GM12878 (cell line): ENCODE measurements at regions of chr5 and their contacts with region 1.

Region 1: GRCh38 chr5:158953929-158954534 is 145.7 kb downstream of the EBF1 start:
- DNase-seq: peak; percentile 98
- ATAC-seq: peak; percentile 79
- H3K4me3 ChIP-seq: 0 out of 2 replicates have a peak overlapping the region, but pooled peaks have one; percentile 6
- H3K27ac ChIP-seq: peak overlapping the region; percentile 93
- H3K4me1 ChIP-seq: peaks cover 70% of the 10 kb centered on the region
- H3K27me3 ChIP-seq: no peaks in the 10 kb centered on the region
- CTCF ChIP-seq: no peak
- EP300 ChIP-seq: peak; percentile 94 to 98; a peak in 3 of 4 replicates
- POLR2A ChIP-seq: peak; percentile 47; the same call in 1 of the 2 replicates
- RAD21 ChIP-seq: 0 out of 2 replicates have a peak, but pooled peaks have one; percentile 23

Region 2: GRCh38 chr5:158780656-158781237 is 173.3 kb before region 1 on chr5:
- CTCF ChIA-PET with region 1: interaction called, 4 read pairs
- POLR2A ChIA-PET with region 1: interaction called, 3 read pairs
- RAD21 ChIA-PET with region 1: interaction called, 16 read pairs
- SMC1A ChIA-PET with region 1: interaction called, 20 read pairs
- in situ Hi-C with region 1: no loop called
- intact Hi-C with region 1: no loop called
- DNase-seq: peak; percentile 28
- ATAC-seq: peak; percentile 85
- H3K4me3 ChIP-seq: no peak overlapping the region
- H3K27ac ChIP-seq: peak overlapping the region; percentile 46
- H3K4me1 ChIP-seq: peaks cover 18% of the 10 kb centered on the region
- H3K27me3 ChIP-seq: no peaks in the 10 kb centered on the region
- CTCF ChIP-seq: no peak
- EP300 ChIP-seq: no peak
- POLR2A ChIP-seq: no peak
- RAD21 ChIP-seq: no peak

Region 3: DNA sequence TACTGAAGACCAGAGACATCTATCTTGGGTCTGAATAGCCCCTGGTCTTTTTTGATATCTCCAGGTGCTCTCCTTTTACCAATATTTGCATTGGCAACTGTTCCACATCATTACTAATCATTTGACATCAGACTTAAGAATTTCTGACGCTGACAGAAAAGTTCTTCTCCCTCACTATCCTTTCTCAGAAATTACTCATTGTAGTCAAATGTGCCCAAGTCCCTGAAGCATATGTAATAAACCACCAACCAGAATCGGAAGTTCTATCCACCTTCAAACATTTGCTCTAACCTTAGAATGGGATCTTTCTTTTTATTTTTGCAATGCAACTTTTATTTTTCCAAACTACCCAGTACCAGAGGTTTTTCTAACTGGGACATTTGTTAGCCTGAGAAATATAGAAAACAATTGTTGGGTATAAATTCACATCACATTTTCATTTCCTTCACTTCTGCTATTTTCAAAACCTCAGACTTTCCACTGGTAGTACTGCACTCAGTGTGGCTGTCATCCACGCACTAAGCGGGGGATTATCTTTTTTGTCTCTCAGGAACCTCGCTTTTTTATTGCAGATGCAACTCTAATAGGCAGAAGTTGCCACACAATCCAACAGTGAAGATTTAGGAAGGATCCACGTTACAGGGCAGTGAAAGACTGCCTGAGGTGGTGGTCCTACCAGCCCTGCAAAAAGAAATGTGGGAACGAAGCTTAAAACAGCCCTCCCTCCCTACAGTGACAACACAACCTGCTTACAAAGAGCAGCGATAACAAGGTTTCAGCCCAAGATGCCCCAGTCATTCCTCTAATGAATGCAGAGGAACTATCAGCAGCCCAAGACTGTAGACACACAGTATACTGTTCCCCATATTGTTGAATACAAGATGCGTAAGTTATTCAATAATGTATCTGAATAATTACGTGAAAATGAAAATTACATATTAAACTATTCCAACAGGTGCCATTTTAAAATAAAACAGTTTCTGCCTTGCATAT is 55.6 kb before region 1 on chr5:
- CTCF ChIA-PET with region 1: no interaction called
- POLR2A ChIA-PET with region 1: interaction called, 7 read pairs
- RAD21 ChIA-PET with region 1: interaction called, 35 read pairs
- SMC1A ChIA-PET with region 1: interaction called, 13 read pairs
- in situ Hi-C with region 1: no loop called
- intact Hi-C with region 1: loop called (anchors 1 kb)
- DNase-seq: no peak
- ATAC-seq: peak; percentile 82
- H3K4me3 ChIP-seq: 0 out of 2 replicates have a peak overlapping the region, but pooled peaks have one; percentile 15
- H3K27ac ChIP-seq: peak overlapping the region; percentile 83
- H3K4me1 ChIP-seq: peaks cover 14% of the 10 kb centered on the region
- H3K27me3 ChIP-seq: no peaks in the 10 kb centered on the region
- CTCF ChIP-seq: no peak
- EP300 ChIP-seq: peak; percentile 70 to 74; a peak in 3 of 4 replicates
- POLR2A ChIP-seq: no peak
- RAD21 ChIP-seq: no peak

Region 4: DNA sequence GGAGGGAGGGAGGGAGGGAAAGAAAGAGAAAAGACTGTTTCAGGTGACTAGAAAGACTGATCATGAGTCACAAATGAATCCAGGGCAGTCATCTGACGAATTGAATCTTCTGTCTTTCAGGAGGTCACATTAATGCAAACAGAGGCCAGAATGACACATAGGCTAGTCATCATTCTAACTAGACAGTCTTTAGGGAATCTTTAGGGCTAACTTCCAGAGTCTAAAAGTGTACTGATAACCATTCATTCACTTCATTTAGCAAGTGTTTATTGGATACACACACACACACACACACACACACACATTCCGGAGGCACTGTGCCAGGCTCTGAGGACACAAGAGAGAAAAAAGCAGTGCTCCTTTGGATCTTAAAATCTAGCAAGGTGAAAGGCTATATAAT is 11.0 kb before region 1 on chr5:
- CTCF ChIA-PET with region 1: interaction called, 8 read pairs
- POLR2A ChIA-PET with region 1: interaction called, 6 read pairs
- RAD21 ChIA-PET with region 1: interaction called, 9 read pairs
- SMC1A ChIA-PET with region 1: interaction called, 32 read pairs
- in situ Hi-C with region 1: no loop called
- intact Hi-C with region 1: no loop called
- DNase-seq: no peak
- ATAC-seq: peak; percentile 74
- H3K4me3 ChIP-seq: no peak overlapping the region
- H3K27ac ChIP-seq: no peak overlapping the region
- H3K4me1 ChIP-seq: peaks cover 15% of the 10 kb centered on the region; the same call in 1 of the 2 replicates
- H3K27me3 ChIP-seq: no peaks in the 10 kb centered on the region
- CTCF ChIP-seq: no peak
- EP300 ChIP-seq: no peak
- POLR2A ChIP-seq: no peak
- RAD21 ChIP-seq: no peak

Region 5: GRCh38 chr5:159034083-159034824 is 80.2 kb after region 1 on chr5:
- CTCF ChIA-PET with region 1: interaction called, 5 read pairs
- POLR2A ChIA-PET with region 1: interaction called, 4 read pairs
- RAD21 ChIA-PET with region 1: interaction called, 9 read pairs
- SMC1A ChIA-PET with region 1: interaction called, 12 read pairs
- in situ Hi-C with region 1: no loop called
- intact Hi-C with region 1: loop called (anchors 5 kb)
- DNase-seq: no peak
- ATAC-seq: peak; percentile 84
- H3K4me3 ChIP-seq: peak overlapping the region; percentile 33
- H3K27ac ChIP-seq: peak overlapping the region; percentile 61
- H3K4me1 ChIP-seq: peaks cover 37% of the 10 kb centered on the region
- H3K27me3 ChIP-seq: no peaks in the 10 kb centered on the region
- CTCF ChIP-seq: no peak
- EP300 ChIP-seq: no peak
- POLR2A ChIP-seq: no peak
- RAD21 ChIP-seq: no peak

Region 6: DNA sequence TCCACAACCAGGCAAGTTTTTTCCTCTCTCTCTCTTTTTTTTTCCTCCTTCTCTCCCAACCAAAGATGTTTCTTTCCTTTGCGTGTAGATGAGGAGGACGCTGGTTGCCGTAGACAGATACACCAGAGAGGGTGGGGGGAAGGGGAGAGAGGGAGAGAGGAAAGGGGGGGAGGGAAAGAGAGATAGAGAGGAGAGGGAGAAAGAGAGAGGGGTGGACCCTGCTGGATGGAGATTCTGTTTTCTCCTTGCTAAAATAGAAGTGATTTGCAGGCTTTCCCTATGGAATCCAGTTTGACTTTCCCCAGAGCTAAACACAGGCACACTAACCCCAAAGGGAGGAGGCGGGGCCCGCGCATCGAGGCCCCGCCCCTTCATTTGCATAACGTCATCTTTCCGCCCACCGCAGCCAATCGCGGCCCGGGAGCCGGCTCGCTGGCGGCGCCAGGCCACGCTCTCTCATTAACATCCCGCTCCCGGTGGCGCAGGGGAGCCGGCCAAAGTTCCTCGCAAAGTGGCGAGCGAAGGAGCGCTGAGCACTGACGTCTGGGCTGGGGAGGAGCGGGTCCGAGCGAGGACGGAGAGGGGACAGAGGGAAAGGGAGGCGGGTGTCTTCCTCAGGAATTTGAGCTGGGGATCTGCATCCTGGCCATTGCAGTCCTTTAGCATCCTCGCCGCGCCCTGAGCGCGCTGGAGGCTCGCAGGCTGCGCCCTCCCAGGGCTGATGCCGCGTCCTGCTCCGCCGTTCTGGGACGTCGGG is 146.2 kb after region 1 on chr5:
- CTCF ChIA-PET with region 1: interaction called, 16 read pairs
- POLR2A ChIA-PET with region 1: interaction called, 29 read pairs
- RAD21 ChIA-PET with region 1: interaction called, 131 read pairs
- SMC1A ChIA-PET with region 1: interaction called, 122 read pairs
- in situ Hi-C with region 1: loop called (anchors 5 kb)
- intact Hi-C with region 1: loop called (anchors 2 kb)
- DNase-seq: peak; percentile 81
- ATAC-seq: peak; percentile 58
- H3K4me3 ChIP-seq: peak overlapping the region; percentile 67
- H3K27ac ChIP-seq: peak overlapping the region; percentile 67
- H3K4me1 ChIP-seq: peaks cover 5% of the 10 kb centered on the region
- H3K27me3 ChIP-seq: no peaks in the 10 kb centered on the region
- CTCF ChIP-seq: no peak
- EP300 ChIP-seq: peak in 1 of 2 experiments; percentile 1; a peak in 2 of 4 replicates
- POLR2A ChIP-seq: peak; percentile 93
- RAD21 ChIP-seq: no peak